ENCODE measurements at regions of chr1 and their contacts with region 1.

Region 1: GRCh38 chr1:153447498-153448170 is 12.8 kb downstream of the S100A7 start:
- DNase-seq: no peak
- H3K4me3 ChIP-seq: no peak overlapping the region
- H3K27ac ChIP-seq: no peak overlapping the region
- H3K4me1 ChIP-seq: no peaks in the 10 kb centered on the region
- H3K27me3 ChIP-seq: no peaks in the 10 kb centered on the region
- CTCF ChIP-seq: no peak
- POLR2A ChIP-seq: no peak

Region 2: DNA sequence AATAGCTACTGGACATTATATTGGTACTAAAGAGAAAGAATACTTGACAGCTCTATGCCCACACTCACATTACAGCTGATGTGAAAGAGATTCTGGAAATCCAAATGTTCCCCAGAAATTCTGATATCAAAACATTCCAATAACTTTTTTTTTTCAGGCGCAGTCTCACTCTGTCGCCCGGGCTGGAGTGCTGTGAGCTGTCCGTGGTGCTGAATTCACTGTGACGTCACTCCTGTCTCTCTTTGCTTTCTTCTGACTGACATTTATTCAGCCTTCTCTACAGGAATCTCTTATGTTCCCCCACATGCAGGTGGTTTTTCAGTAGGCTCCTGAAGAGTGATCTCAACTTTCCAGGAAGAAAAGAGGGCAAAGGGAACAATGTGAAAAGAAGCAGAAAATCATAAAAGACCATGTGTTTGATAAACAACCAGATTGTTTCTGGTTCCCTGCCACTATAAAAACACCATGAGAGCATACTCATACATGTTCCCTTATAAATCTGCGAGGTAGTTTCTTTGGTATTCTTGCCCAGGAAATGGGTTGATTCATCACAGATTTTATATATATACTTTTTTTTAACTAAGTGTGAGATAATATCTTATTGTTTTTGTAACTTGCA is 25.1 kb before region 1 on chr1:
- CTCF ChIA-PET with region 1: interaction called, 3 read pairs
- POLR2A ChIA-PET with region 1: no interaction called
- dilution Hi-C with region 1: no loop called
- intact Hi-C with region 1: loop called (anchors 1 kb)
- DNase-seq: peak; percentile 70
- H3K4me3 ChIP-seq: no peak overlapping the region
- H3K27ac ChIP-seq: no peak overlapping the region
- H3K4me1 ChIP-seq: no peaks in the 10 kb centered on the region
- H3K27me3 ChIP-seq: no peaks in the 10 kb centered on the region
- CTCF ChIP-seq: no peak
- POLR2A ChIP-seq: no peak

Region 3: GRCh38 chr1:153459655-153460054 is 12.0 kb after region 1 on chr1:
- CTCF ChIA-PET with region 1: no interaction called
- POLR2A ChIA-PET with region 1: no interaction called
- dilution Hi-C with region 1: no loop called
- intact Hi-C with region 1: no loop called
- DNase-seq: no peak
- H3K4me3 ChIP-seq: no peak overlapping the region
- H3K27ac ChIP-seq: no peak overlapping the region
- H3K4me1 ChIP-seq: no peaks in the 10 kb centered on the region
- H3K27me3 ChIP-seq: peaks cover 0 to 2% of the 10 kb centered on the region in 2 experiments
- CTCF ChIP-seq: no peak
- POLR2A ChIP-seq: no peak

Measured in endothelial cell of umbilical vein (primary cell).